Activated B cell treated with CpG ODN at 0.5 μM for 24 hours (primary cell): ENCODE measurements at regions of chr21 and their contacts with region 1.

Region 1: GRCh38 chr21:42818328-42818749 is 61.0 kb downstream of the WDR4 start:
- DNase-seq: no peak
- ATAC-seq: peak; percentile 70
- H3K4me3 Mint-ChIP-seq: no peak overlapping the region
- H3K27ac Mint-ChIP-seq: no peak overlapping the region
- H3K4me1 Mint-ChIP-seq: no peaks in the 10 kb centered on the region
- H3K27me3 Mint-ChIP-seq: peaks cover 6% of the 10 kb centered on the region
- CTCF ChIP-seq: peak; percentile 78

Region 2: DNA sequence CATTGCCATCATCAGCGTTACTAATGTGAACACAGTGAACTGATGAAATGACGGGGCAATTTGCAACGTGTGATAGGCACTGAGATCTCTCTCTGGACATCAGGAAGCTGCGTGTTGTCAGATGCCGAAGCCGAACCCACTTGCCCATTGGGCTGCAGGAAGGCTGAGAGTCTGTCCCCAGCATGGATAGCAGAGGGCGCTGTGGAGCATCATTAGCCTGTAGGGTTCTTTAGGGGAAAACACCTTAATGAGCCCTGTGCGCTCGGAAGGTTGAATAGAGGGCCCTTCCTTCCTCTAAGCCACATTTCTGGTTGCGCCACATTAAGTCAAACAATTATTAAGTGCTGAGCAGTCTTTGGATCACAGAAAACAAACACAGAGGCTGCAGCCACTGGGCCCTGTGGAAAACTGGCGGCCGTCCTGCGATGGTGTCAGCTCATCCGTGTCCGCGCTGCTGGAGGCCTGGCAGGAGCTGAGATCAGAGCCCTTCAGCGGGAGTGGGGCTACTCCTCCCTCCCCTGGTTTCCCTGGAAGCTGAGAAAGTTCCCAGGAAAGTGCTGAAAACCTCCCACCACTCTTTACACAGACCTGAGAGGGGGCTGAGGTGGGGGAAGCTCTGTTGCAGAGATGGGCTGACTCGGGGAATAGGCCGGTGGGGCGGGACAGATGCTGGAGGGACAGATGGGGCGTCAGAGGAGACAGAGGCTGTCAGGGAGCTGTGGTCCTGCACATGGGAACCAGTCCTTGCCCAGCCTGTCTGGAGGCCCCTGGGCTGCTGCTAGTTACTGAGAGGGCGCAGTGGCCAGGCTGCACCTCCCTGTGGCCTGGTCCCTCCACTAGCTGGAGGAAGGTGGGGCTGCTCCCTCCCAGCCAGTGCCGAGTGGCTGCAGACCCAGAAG is 480.3 kb before region 1 on chr21:
- CTCF ChIA-PET with region 1: no interaction called
- POLR2A ChIA-PET with region 1: no interaction called
- intact Hi-C with region 1: loop called (anchors 10 kb)
- DNase-seq: peak; percentile 61
- ATAC-seq: peak; percentile 100
- H3K4me3 Mint-ChIP-seq: no peak overlapping the region
- H3K27ac Mint-ChIP-seq: no peak overlapping the region
- H3K4me1 Mint-ChIP-seq: peaks cover 10% of the 10 kb centered on the region
- H3K27me3 Mint-ChIP-seq: peaks cover 13% of the 10 kb centered on the region
- CTCF ChIP-seq: no peak

Region 3: DNA sequence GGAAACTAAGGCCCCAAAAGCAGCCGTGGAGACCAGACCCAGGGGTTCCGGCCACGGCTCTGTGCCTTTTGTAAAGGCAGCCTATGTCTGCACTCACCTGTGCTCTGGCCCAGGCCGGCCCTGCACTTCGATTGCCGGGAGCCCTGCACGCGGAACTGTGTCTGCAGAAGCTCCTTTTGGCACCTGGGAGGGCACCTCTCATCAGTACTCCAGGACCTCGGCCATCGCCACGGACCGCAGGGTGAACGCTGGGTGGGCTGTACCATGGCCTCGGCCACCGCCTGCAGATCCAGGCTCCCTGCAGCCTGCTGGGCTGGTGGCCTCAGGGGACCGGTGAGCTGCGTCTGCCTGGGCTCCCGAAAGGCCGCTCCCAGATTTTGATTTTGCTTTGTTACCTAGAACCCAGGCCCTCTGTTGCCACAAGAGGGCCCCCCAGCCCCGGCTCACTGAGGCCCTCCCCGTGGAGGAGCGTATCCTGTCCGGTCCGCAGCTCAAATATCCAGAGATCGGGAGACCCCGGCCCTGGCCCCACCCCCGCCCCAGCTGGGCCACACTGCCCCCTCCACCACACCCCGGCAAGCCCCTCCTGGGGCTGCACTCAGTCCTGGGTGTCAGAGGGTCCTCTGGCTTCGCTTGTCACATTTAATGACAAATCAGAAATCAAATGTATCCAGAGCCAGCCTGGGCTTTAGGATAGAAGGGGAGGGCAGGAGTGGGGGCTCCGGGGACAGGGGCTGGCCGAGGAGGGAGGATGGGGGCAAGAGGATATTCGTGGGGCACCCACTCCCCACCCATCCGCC is 225.1 kb before region 1 on chr21:
- CTCF ChIA-PET with region 1: interaction called, 34 read pairs
- POLR2A ChIA-PET with region 1: no interaction called
- intact Hi-C with region 1: loop called (anchors 5 kb)
- DNase-seq: peak; percentile 60
- ATAC-seq: peak; percentile 79
- H3K4me3 Mint-ChIP-seq: no peak overlapping the region
- H3K27ac Mint-ChIP-seq: no peak overlapping the region
- H3K4me1 Mint-ChIP-seq: peaks cover 11% of the 10 kb centered on the region
- H3K27me3 Mint-ChIP-seq: peaks cover 14% of the 10 kb centered on the region
- CTCF ChIP-seq: no peak

Region 4: GRCh38 chr21:42711667-42712066 is 106.7 kb before region 1 on chr21:
- CTCF ChIA-PET with region 1: no interaction called
- POLR2A ChIA-PET with region 1: no interaction called
- intact Hi-C with region 1: loop called (anchors 10 kb)
- DNase-seq: no peak
- ATAC-seq: no peak
- H3K4me3 Mint-ChIP-seq: no peak overlapping the region
- H3K27ac Mint-ChIP-seq: no peak overlapping the region
- H3K4me1 Mint-ChIP-seq: no peaks in the 10 kb centered on the region
- H3K27me3 Mint-ChIP-seq: peaks cover 3% of the 10 kb centered on the region
- CTCF ChIP-seq: no peak